Calu3 (cell line): ENCODE measurements at regions of chr18 and their contacts with region 1.

Region 1: DNA sequence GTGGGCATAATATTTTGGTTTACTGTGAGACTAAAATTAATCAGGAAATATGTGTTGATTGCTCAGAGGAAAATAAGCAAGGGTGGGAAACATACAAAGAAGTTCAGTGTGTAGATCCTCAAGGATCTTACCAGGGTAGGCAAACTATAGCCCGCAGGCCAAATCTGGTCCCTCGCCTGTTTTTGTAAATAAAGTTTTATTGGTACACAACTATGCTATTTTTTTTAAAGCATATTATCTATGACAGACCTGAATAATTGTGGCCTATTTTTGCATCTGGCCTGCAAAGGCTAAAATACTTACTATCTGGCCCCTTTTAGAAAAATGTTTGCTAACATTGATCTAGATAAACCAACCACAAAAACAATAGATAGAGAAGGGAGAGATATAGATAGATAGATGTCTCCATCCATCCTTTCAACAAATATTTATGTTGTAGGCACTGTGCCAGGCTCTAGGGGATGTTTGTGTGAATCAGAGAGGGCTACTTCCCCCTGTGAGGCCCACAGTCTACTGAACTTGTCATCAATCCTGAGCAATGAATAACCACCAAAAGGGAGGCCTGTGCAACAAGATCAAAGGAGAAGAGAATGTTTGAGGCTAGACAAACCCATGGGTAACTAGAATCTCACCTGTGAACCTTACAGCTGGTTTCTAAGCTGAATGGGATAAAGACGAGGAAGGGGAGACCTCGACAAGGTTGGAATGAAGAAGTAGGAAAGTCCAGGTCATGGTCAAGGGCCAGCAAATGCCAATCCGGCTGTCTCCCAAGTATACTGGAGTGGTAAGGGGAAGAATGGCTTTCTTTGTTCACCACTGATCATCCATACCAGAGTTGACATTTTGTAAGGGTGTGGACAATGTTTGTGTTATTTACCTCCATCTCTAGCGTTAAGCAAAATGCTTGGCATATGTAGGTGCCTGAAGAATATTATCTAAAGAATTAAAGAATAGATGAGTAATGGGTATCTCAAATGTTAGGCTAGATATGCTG is 23.6 kb downstream of the ALPK2 start:
- DNase-seq: peak; percentile 71
- H3K4me3 Mint-ChIP-seq: peak overlapping the region; percentile 26
- H3K27ac Mint-ChIP-seq: peak overlapping the region; percentile 95
- H3K4me1 Mint-ChIP-seq: peaks cover 39% of the 10 kb centered on the region
- H3K27me3 Mint-ChIP-seq: no peaks in the 10 kb centered on the region
- CTCF ChIP-seq: no peak

Region 2: GRCh38 chr18:58541789-58542425 is 63.4 kb before region 1 on chr18:
- CTCF ChIA-PET with region 1: no interaction called
- intact Hi-C with region 1: loop called (anchors 5 kb)
- DNase-seq: peak; percentile 71
- H3K4me3 Mint-ChIP-seq: peak overlapping the region; percentile 25
- H3K27ac Mint-ChIP-seq: peak overlapping the region; percentile 81
- H3K4me1 Mint-ChIP-seq: peaks cover 82% of the 10 kb centered on the region
- H3K27me3 Mint-ChIP-seq: no peaks in the 10 kb centered on the region
- CTCF ChIP-seq: no peak

Region 3: DNA sequence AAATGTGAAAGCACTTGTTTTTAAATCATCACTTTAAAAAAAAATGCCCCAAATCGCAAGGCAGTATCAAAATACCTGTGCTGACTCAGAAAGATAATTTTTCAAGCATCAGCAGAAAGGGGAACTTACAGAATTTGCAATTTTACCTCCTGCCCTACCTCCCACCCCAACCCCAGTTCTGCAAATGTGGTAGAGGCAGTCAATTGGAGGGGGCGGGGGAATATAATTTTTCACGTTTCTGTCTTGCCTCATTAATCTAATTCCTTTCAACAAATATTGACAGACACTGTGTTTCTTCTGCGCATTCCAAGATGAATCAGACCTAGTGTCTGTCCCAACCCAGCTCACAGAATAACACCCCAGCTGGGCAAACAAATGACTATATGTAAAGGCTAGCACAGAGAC is 53.3 kb before region 1 on chr18:
- CTCF ChIA-PET with region 1: no interaction called
- intact Hi-C with region 1: no loop called
- DNase-seq: peak; percentile 11
- H3K4me3 Mint-ChIP-seq: no peak overlapping the region
- H3K27ac Mint-ChIP-seq: no peak overlapping the region
- H3K4me1 Mint-ChIP-seq: peaks cover 48% of the 10 kb centered on the region
- H3K27me3 Mint-ChIP-seq: no peaks in the 10 kb centered on the region
- CTCF ChIP-seq: no peak

Region 4: DNA sequence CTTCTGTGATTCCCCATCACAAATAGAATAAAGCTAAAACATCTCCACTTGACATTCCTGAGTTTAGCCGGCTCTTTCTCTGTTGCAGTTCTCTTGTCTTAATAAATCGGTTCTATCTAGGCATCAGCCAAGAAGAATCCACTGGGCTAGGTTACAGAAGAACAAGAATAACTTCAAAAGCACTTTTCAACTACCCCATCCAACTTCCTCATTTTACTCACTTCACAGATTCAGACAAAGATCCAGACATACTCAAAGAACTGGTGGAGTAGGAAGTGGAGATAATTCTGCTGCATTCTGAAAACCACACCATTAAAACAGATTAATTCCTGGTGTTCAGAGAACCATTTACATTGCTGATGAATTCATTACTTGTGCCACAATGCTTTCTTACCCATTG is 33.1 kb after region 1 on chr18:
- CTCF ChIA-PET with region 1: no interaction called
- intact Hi-C with region 1: no loop called
- DNase-seq: no peak
- H3K4me3 Mint-ChIP-seq: no peak overlapping the region
- H3K27ac Mint-ChIP-seq: no peak overlapping the region
- H3K4me1 Mint-ChIP-seq: no peaks in the 10 kb centered on the region
- H3K27me3 Mint-ChIP-seq: no peaks in the 10 kb centered on the region
- CTCF ChIP-seq: no peak

Region 5: GRCh38 chr18:58671111-58671631 is 65.8 kb after region 1 on chr18 and contains the start of gene MALT1:
- CTCF ChIA-PET with region 1: no interaction called
- intact Hi-C with region 1: loop called (anchors 2 kb)
- DNase-seq: peak; percentile 98
- H3K4me3 Mint-ChIP-seq: peak within 1 kb of the TSS; percentile 91
- H3K27ac Mint-ChIP-seq: peak within 1 kb of the TSS; percentile 78
- H3K4me1 Mint-ChIP-seq: peaks cover 66% of the 10 kb centered on the region
- H3K27me3 Mint-ChIP-seq: no peaks in the 10 kb centered on the region
- CTCF ChIP-seq: no peak
- total RNA-seq, gene MALT1: 28.1 and 37.6 TPM in 2 replicates